ENCODE measurements at regions of chr18 and their contacts with region 1.

Region 1: GRCh38 chr18:61435064-61435652 is 101.9 kb downstream of the CDH20 start:
- DNase-seq: no peak
- ATAC-seq: no peak
- H3K4me3 ChIP-seq: no peak overlapping the region
- H3K4me3 Mint-ChIP-seq: no peak overlapping the region
- H3K27ac ChIP-seq: no peak overlapping the region
- H3K27ac Mint-ChIP-seq: no peak overlapping the region
- H3K4me1 ChIP-seq: no peaks in the 10 kb centered on the region
- H3K4me1 Mint-ChIP-seq: no peaks in the 10 kb centered on the region
- H3K27me3 ChIP-seq: no peaks in the 10 kb centered on the region
- H3K27me3 Mint-ChIP-seq: peaks cover 2% of the 10 kb centered on the region
- CTCF ChIP-seq: no peak

Region 2: GRCh38 chr18:61371111-61371510 is 64.0 kb before region 1 on chr18:
- CTCF ChIA-PET with region 1: no interaction called
- POLR2A ChIA-PET with region 1: no interaction called
- intact Hi-C with region 1: loop called in 1 of 2 experiments (anchors 10 kb)
- DNase-seq: no peak
- ATAC-seq: no peak
- H3K4me3 ChIP-seq: no peak overlapping the region
- H3K4me3 Mint-ChIP-seq: no peak overlapping the region
- H3K27ac ChIP-seq: no peak overlapping the region
- H3K27ac Mint-ChIP-seq: no peak overlapping the region
- H3K4me1 ChIP-seq: no peaks in the 10 kb centered on the region
- H3K4me1 Mint-ChIP-seq: no peaks in the 10 kb centered on the region
- H3K27me3 ChIP-seq: no peaks in the 10 kb centered on the region
- H3K27me3 Mint-ChIP-seq: no peaks in the 10 kb centered on the region
- CTCF ChIP-seq: no peak